CD8-positive, alpha-beta T cell (primary cell): ENCODE measurements at regions of chr2 and their contacts with region 1.

Region 1: DNA sequence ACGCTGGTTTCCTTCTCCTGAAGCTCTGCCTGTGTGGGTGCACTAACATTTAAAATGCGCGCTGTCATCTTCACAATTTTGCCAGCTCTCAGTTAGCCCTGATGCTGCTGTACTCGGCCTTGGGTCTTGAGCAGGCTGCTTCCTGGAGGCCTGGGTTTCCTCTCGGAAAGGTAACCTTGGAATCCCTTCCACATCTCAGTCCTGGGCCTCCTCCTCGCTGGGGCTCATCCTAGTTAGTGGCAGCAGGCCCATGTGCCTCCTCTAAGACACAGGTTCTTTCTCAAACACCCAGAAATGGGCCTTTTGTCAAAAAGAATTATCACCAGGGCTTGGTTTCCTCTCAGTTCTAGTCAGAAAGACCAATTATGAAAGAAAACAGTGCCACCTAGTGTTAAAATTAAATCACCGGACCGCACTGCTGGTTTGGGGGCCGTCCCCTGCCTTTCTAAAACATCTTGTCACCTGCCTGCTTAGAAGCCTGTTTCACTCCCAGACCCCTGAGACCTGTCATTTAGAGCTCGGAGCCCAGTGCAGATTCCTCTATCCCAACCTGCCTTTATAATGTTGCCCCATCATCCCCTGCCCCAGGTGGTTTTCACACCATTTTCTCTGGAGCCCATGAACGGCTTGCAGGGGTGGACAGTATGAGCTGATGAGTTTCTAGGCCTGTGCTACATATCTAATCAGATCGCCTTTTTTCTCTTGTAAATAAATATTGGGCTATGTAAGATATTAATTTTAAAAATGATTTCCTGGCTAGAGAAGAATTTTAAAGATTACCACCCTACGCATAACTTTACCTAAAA is 42.4 kb downstream of the HK2 start:
- DNase-seq: peak in 8 of 9 experiments; percentile 5 to 73 (median 42)
- ATAC-seq: peak; percentile 77
- H3K4me3 ChIP-seq: no peak overlapping the region
- H3K4me3 Mint-ChIP-seq: no peak overlapping the region
- H3K27ac ChIP-seq: no peak overlapping the region
- H3K27ac Mint-ChIP-seq: no peak overlapping the region
- H3K4me1 ChIP-seq: peaks cover 3% of the 10 kb centered on the region
- H3K4me1 Mint-ChIP-seq: peaks cover 4% of the 10 kb centered on the region
- H3K27me3 ChIP-seq: no peaks in the 10 kb centered on the region
- H3K27me3 Mint-ChIP-seq: no peaks in the 10 kb centered on the region
- CTCF ChIP-seq: peak; percentile 75

Region 2: GRCh38 chr2:74690571-74690970 is 185.7 kb before region 1 on chr2:
- CTCF ChIA-PET with region 1: interaction called, 37 read pairs
- POLR2A ChIA-PET with region 1: no interaction called
- intact Hi-C with region 1: loop called (anchors 1 kb)
- DNase-seq: peak in 2 of 9 experiments; percentile 41 to 54
- ATAC-seq: peak; percentile 54
- H3K4me3 ChIP-seq: no peak overlapping the region
- H3K4me3 Mint-ChIP-seq: no peak overlapping the region
- H3K27ac ChIP-seq: no peak overlapping the region
- H3K27ac Mint-ChIP-seq: no peak overlapping the region
- H3K4me1 ChIP-seq: no peaks in the 10 kb centered on the region
- H3K4me1 Mint-ChIP-seq: no peaks in the 10 kb centered on the region
- H3K27me3 ChIP-seq: no peaks in the 10 kb centered on the region
- H3K27me3 Mint-ChIP-seq: no peaks in the 10 kb centered on the region
- CTCF ChIP-seq: peak; percentile 51

Region 3: DNA sequence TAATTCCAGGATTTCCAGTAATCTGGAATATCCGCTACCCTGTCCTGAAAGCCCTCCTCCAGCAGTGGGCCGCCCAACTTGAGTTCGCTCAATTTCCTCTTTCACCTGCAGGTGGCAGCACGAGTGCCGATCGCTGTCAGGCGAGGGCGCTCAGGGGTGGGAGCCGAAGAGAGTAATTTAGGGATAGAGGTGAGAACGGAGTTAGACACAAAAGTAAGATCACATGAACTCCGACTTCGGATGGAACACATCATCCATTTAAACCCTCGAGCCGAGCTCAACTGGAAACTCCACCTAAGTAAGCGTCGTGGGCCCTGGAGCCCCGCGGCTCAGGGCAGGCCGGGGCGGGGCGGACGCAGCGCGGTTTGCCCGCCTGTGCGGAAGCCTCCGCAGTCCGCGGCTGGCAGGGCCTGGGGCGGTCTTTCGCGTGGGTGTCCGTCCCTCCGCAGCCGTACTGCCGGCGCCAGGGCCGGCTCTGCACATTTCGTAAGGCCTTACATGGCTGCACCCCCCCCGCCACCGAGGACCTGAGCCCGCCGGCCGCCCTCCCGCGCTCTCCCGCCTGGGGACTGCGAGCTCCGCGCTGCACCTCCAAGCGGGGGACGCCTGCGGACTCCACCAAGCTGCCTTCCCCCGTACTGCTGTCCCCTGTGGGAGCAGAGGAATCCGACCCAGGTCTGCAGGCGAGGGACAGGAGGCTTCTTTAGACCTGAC is 161.0 kb before region 1 on chr2:
- CTCF ChIA-PET with region 1: interaction called, 187 read pairs
- POLR2A ChIA-PET with region 1: interaction called, 3 read pairs
- intact Hi-C with region 1: loop called (anchors 1 kb)
- DNase-seq: peak; percentile 60 to 86 (median 79)
- ATAC-seq: peak; percentile 92
- H3K4me3 ChIP-seq: peak overlapping the region; percentile 29 to 35
- H3K4me3 Mint-ChIP-seq: peak overlapping the region; percentile 94
- H3K27ac ChIP-seq: no peak overlapping the region
- H3K27ac Mint-ChIP-seq: no peak overlapping the region
- H3K4me1 ChIP-seq: peaks cover 5% of the 10 kb centered on the region
- H3K4me1 Mint-ChIP-seq: peaks cover 9% of the 10 kb centered on the region
- H3K27me3 ChIP-seq: peaks cover 0 to 2% of the 10 kb centered on the region in 2 experiments
- H3K27me3 Mint-ChIP-seq: peaks cover 17% of the 10 kb centered on the region
- CTCF ChIP-seq: peak; percentile 84

Region 4: DNA sequence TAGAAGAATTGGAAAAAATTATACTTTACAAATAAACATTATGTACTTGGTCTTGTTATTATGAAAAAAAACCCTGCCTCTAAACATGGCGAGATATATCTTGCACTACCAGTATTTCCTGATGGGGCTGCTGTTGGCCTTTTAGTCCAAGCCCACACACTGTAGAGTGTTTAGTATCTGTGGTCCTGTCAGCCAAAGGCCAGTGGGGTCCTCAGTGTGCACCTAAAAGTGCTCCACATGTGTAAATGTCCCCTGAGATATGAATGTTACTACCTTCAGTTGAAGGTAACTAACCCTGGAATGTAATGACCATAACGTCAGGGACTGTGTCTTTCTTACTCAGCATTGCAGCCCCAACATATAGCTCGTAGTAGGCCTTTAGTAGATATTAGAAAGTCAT is 113.5 kb before region 1 on chr2:
- CTCF ChIA-PET with region 1: interaction called, 5 read pairs
- POLR2A ChIA-PET with region 1: no interaction called
- intact Hi-C with region 1: loop called (anchors 1 to 2 kb)
- DNase-seq: peak in 1 of 9 experiments; percentile 13
- ATAC-seq: no peak
- H3K4me3 ChIP-seq: no peak overlapping the region
- H3K4me3 Mint-ChIP-seq: no peak overlapping the region
- H3K27ac ChIP-seq: no peak overlapping the region
- H3K27ac Mint-ChIP-seq: no peak overlapping the region
- H3K4me1 ChIP-seq: no peaks in the 10 kb centered on the region
- H3K4me1 Mint-ChIP-seq: peaks cover 10% of the 10 kb centered on the region
- H3K27me3 ChIP-seq: no peaks in the 10 kb centered on the region
- H3K27me3 Mint-ChIP-seq: peaks cover 3% of the 10 kb centered on the region
- CTCF ChIP-seq: no peak

Region 5: DNA sequence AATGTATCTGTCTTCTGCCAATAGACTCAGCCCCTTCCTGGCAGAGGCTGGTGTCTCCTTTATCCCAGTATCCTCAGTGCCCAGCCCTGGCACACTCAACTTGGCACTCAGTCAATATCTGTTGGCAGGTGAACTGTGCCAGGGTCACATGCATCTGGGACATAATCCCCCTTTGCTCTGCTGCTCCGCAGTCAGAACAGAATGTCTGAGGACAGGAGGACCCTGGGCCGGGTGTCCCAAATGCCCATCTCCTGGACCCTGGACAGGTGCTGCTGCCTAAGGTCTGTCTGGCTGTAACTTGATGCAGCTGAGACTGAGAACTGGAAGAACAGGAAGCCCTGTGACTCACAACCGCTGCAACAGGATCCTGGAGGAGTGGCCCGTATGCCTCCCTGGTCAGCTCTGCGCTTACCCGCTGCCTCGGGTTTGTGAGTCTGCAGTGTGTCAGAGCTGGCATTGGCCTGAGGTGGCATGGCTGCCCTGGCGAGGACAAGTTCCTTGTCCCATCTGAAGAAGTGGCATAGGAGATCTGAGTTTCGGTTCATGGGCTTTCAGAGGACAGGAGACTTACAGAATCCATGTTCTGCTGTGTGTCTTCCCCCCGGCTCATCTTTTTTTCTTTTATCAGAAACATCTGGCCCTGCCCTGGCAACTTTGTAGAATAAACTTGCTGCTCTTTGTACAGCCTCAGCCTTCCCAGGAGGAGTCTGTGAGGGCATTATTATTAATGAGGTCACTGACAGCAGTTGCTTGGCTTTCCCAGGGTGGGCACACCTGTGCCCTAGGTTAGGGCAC is 30.9 kb before region 1 on chr2:
- CTCF ChIA-PET with region 1: interaction called, 78 read pairs
- POLR2A ChIA-PET with region 1: no interaction called
- intact Hi-C with region 1: no loop called
- DNase-seq: peak in 5 of 9 experiments; percentile 15 to 43 (median 23)
- ATAC-seq: no peak
- H3K4me3 ChIP-seq: no peak overlapping the region
- H3K4me3 Mint-ChIP-seq: peak overlapping the region; percentile 37
- H3K27ac ChIP-seq: no peak overlapping the region
- H3K27ac Mint-ChIP-seq: no peak overlapping the region
- H3K4me1 ChIP-seq: peaks cover 97% of the 10 kb centered on the region
- H3K4me1 Mint-ChIP-seq: peaks cover 90% of the 10 kb centered on the region
- H3K27me3 ChIP-seq: no peaks in the 10 kb centered on the region
- H3K27me3 Mint-ChIP-seq: no peaks in the 10 kb centered on the region
- CTCF ChIP-seq: no peak